K562 (cell line): ENCODE measurements at regions of chr10 and their contacts with region 1.

Region 1: GRCh38 chr10:15719899-15720634 is at the start of gene ITGA8:
- DNase-seq: no peak
- ATAC-seq: no peak
- H3K4me3 ChIP-seq: no peak within 1 kb of the TSS
- H3K27ac ChIP-seq: no peak within 1 kb of the TSS
- H3K4me1 ChIP-seq: no peaks in the 10 kb centered on the region; a peak in 1 of 5 replicates
- H3K27me3 ChIP-seq: peaks cover 0 to 4% of the 10 kb centered on the region in 2 experiments; a peak in 1 of 5 replicates
- CTCF ChIP-seq: peak in 1 of 3 experiments; percentile 9; a peak in 1 of 6 replicates
- EP300 ChIP-seq: no peak
- POLR2A ChIP-seq: no peak
- RAD21 ChIP-seq: no peak
- polyA plus RNA-seq, gene ITGA8: 0.07 TPM in 1 of 2 experiments, not detected in the other

Region 2: GRCh38 chr10:15461353-15462108 is 258.5 kb before region 1 on chr10:
- CTCF ChIA-PET with region 1: no interaction called
- POLR2A ChIA-PET with region 1: no interaction called
- in situ Hi-C with region 1: no loop called
- intact Hi-C with region 1: loop called (anchors 1 kb)
- DNase-seq: peak; percentile 52 to 85 (median 68)
- ATAC-seq: peak; percentile 100
- H3K4me3 ChIP-seq: no peak overlapping the region
- H3K27ac ChIP-seq: peak overlapping the region; percentile 27; the same call in 1 of the 3 replicates
- H3K4me1 ChIP-seq: peaks cover 0 to 7% of the 10 kb centered on the region in 2 experiments; a peak in 2 of 5 replicates
- H3K27me3 ChIP-seq: no peaks in the 10 kb centered on the region
- CTCF ChIP-seq: peak; percentile 64 to 76 (median 75)
- EP300 ChIP-seq: peak; percentile 47; the same call in 1 of the 2 replicates
- POLR2A ChIP-seq: no peak
- RAD21 ChIP-seq: peak; percentile 64 to 91

Region 3: GRCh38 chr10:15585303-15585715 is 134.8 kb before region 1 on chr10:
- CTCF ChIA-PET with region 1: interaction called, 4 read pairs
- POLR2A ChIA-PET with region 1: no interaction called
- in situ Hi-C with region 1: loop called (anchors 25 kb)
- intact Hi-C with region 1: loop called (anchors 2 kb)
- DNase-seq: peak; percentile 69 to 80 (median 71)
- ATAC-seq: peak; percentile 96
- H3K4me3 ChIP-seq: no peak overlapping the region
- H3K27ac ChIP-seq: no peak overlapping the region
- H3K4me1 ChIP-seq: peaks cover 0 to 4% of the 10 kb centered on the region in 2 experiments; a peak in 1 of 5 replicates
- H3K27me3 ChIP-seq: no peaks in the 10 kb centered on the region
- CTCF ChIP-seq: peak; percentile 80 to 96 (median 80)
- EP300 ChIP-seq: no peak
- POLR2A ChIP-seq: no peak
- RAD21 ChIP-seq: peak; percentile 83 to 92